CD4-positive, alpha-beta T cell (primary cell): ENCODE measurements at regions of chr19 and their contacts with region 1.

Region 1: DNA sequence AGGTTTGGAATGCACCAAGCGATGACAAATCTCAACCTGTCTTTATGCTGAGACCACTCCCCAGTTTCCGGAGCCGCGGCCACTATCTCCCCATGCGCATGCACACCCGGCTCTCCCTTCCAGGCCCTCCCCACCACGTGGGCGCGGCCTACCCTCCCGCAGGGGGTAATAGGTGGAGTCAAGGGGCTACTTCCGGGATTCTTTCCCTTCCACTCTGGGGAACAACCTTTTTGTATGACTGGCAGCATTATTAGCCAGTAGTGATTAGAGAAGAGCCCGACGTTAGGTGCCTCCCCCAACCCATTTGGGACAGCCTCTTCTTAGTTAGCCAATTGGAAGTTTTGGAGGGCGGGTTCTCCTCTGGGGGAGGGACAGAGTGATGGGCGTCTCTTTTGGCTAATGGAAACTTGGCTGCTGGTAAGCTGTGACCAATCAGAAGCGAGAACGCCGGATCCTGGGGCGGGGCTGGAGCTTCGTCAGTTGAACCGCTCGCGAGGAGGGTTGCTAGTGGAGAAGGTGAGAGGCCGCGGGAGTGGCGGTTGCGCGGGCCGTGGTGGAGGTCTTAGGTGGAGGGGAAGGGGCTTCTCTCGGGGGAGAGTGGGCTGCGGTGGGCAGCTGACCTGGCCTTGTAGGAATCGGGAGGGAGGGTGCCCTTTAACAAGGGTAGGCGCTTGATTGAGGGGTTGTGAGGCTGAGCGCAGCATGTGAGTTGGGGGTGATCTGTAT is at the start of gene CCDC61:
- DNase-seq: peak; percentile 91 to 100 (median 94)
- ATAC-seq: peak; percentile 94
- H3K4me3 ChIP-seq: peak within 1 kb of the TSS; percentile 79
- H3K4me3 Mint-ChIP-seq: no peak within 1 kb of the TSS
- H3K27ac ChIP-seq: peak within 1 kb of the TSS; percentile 49 to 67
- H3K27ac Mint-ChIP-seq: no peak within 1 kb of the TSS
- H3K4me1 ChIP-seq: peaks cover 27% of the 10 kb centered on the region
- H3K4me1 Mint-ChIP-seq: peaks cover 17% of the 10 kb centered on the region
- H3K27me3 ChIP-seq: no peaks in the 10 kb centered on the region
- H3K27me3 Mint-ChIP-seq: peaks cover 5% of the 10 kb centered on the region
- CTCF ChIP-seq: no peak
- total RNA-seq, gene CCDC61: 4.9 to 6.6 TPM

Region 2: DNA sequence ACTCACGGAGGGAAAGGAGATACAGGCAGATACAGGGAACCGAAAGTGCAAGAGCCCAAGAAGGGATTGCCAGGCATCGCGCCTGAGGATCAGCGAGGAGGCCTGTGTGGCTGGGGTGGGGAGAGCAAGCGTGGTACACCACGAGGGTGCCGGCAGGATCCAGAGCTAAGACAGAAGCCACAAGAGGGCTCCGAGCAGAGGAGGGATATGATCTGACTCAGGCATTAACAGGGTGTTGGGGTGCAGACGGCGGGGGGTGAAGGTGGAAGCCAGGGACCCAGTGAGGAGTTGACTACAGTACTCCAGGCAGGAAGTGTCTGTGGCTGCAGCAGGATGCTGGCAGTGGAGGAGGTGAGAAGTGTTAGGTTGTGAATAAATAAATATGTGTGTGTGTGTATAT is 907.6 kb before region 1 on chr19:
- CTCF ChIA-PET with region 1: no interaction called
- POLR2A ChIA-PET with region 1: no interaction called
- intact Hi-C with region 1: loop called in 1 of 2 experiments (anchors 10 kb)
- DNase-seq: peak in 12 of 14 experiments; percentile 23 to 90 (median 48)
- ATAC-seq: peak; percentile 52
- H3K4me3 ChIP-seq: no peak overlapping the region
- H3K4me3 Mint-ChIP-seq: peak overlapping the region; percentile 74
- H3K27ac ChIP-seq: peak overlapping the region; percentile 15 to 53
- H3K27ac Mint-ChIP-seq: peak overlapping the region; percentile 24
- H3K4me1 ChIP-seq: peaks cover 49% of the 10 kb centered on the region
- H3K4me1 Mint-ChIP-seq: peaks cover 25% of the 10 kb centered on the region
- H3K27me3 ChIP-seq: no peaks in the 10 kb centered on the region
- H3K27me3 Mint-ChIP-seq: no peaks in the 10 kb centered on the region
- CTCF ChIP-seq: no peak

Region 3: DNA sequence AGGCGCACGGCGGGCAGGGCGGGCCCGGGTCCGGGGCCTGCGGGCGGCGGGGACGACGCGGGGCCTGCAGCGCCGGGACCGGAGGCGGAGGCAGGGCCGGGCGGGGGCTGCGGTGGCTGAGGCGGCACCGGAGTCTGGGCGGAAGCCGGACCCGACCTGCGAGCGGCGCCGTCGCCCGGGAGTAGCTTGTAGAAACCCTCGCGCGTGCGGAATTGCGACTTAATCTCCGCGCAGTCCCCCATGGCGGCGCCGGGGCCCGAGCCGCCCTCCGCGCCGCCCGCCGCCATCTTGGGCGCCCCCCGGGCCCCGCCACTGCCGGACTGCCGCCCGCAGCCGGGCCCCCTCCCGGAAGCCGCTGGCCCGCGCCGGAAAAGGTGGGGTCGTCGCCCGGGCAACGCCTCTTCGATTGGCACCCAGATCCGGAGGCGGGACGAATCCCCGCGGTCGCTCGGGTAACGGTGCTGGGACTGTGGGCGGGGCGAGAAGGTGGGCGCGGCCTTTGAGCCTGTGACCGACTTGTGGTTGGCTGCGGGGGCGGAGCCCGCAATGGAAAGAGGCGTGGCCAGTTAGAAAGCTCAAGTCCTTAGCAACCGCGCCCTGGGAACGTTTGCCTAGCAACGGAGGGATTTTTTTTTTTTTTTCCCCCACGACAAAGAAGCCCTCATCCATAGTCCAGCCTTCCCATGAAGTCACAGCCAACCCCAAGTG is 202.5 kb before region 1 on chr19 and contains the start of gene DMWD:
- CTCF ChIA-PET with region 1: no interaction called
- POLR2A ChIA-PET with region 1: no interaction called
- intact Hi-C with region 1: loop called in 1 of 2 experiments (anchors 10 kb)
- DNase-seq: peak; percentile 98 to 100 (median 99)
- ATAC-seq: peak; percentile 92
- H3K4me3 ChIP-seq: peak within 1 kb of the TSS; percentile 55
- H3K4me3 Mint-ChIP-seq: peak within 1 kb of the TSS; percentile 92
- H3K27ac ChIP-seq: no peak within 1 kb of the TSS
- H3K27ac Mint-ChIP-seq: peak within 1 kb of the TSS; percentile 81
- H3K4me1 ChIP-seq: peaks cover 30% of the 10 kb centered on the region
- H3K4me1 Mint-ChIP-seq: peaks cover 52% of the 10 kb centered on the region
- H3K27me3 ChIP-seq: peaks cover 16 to 23% of the 10 kb centered on the region in 2 experiments
- H3K27me3 Mint-ChIP-seq: peaks cover 32% of the 10 kb centered on the region
- CTCF ChIP-seq: no peak
- total RNA-seq, gene DMWD: 28.6 to 31.5 TPM

Region 4: GRCh38 chr19:45862564-45863334 is 132.4 kb before region 1 on chr19 and contains the start of gene SYMPK:
- CTCF ChIA-PET with region 1: no interaction called
- POLR2A ChIA-PET with region 1: interaction called, 11 read pairs
- intact Hi-C with region 1: loop called in 1 of 2 experiments (anchors 2 kb)
- DNase-seq: peak; percentile 96 to 99 (median 98)
- ATAC-seq: peak; percentile 97
- H3K4me3 ChIP-seq: peak within 1 kb of the TSS; percentile 80
- H3K4me3 Mint-ChIP-seq: peak within 1 kb of the TSS; percentile 99
- H3K27ac ChIP-seq: peak within 1 kb of the TSS; percentile 66 to 86
- H3K27ac Mint-ChIP-seq: peak within 1 kb of the TSS; percentile 83
- H3K4me1 ChIP-seq: peaks cover 29% of the 10 kb centered on the region
- H3K4me1 Mint-ChIP-seq: peaks cover 34% of the 10 kb centered on the region
- H3K27me3 ChIP-seq: peaks cover 9 to 13% of the 10 kb centered on the region in 2 experiments
- H3K27me3 Mint-ChIP-seq: peaks cover 29% of the 10 kb centered on the region
- CTCF ChIP-seq: no peak
- total RNA-seq, gene SYMPK: 63.3 to 65.0 TPM

Region 5: DNA sequence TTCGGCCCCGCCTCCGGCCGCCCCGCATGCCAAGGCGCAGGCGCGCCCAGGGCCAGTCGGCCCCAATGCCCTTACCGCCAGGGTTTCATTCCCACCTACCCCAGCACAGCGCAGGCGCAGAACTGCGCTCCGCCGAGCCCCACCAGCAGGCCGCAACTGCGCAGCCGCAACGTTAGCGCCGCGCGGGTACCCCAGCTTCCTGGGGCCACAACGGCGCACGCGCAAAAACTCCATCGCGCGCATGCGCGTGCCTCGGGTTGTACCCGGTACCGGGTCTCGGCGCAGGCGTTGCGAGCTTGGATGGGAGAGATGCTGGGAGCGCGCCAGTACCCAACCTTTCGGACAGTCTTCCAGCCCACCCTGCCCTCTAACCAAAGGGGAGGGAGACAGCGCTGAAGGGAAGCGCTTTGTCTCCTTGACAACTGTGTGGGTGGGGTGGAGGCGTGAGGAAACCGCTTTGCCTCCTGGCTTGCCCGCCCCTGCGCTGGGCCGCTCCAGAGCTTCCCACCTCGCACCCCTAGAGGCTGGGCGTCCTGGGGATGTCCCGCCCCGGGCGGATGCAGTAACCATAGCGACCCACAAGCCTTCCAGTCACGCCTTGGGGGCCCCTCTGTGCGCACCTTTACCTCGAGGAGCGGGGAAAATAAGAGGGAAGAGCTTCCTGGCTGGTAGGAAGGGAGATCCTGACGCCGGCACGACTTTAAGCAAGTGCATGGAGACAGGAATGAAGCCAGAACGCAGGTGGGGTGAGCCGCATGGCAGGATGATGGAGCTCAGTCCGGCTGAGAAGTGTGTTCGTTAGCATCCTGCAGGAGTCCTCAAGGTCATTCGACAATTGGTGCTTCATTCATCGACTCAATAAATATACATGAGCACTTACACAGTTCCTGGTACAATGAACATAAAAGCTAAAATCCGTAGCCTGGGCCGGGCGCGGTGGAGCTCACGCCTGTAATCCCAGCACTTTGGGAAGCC is 92.2 kb before region 1 on chr19:
- CTCF ChIA-PET with region 1: no interaction called
- POLR2A ChIA-PET with region 1: interaction called, 7 read pairs
- intact Hi-C with region 1: loop called in 1 of 2 experiments (anchors 5 kb)
- DNase-seq: peak; percentile 97 to 100 (median 99)
- ATAC-seq: peak; percentile 81
- H3K4me3 ChIP-seq: peak overlapping the region; percentile 64
- H3K4me3 Mint-ChIP-seq: peak overlapping the region; percentile 95
- H3K27ac ChIP-seq: peak overlapping the region; percentile 68 to 85
- H3K27ac Mint-ChIP-seq: peak overlapping the region; percentile 89
- H3K4me1 ChIP-seq: peaks cover 26% of the 10 kb centered on the region
- H3K4me1 Mint-ChIP-seq: peaks cover 28% of the 10 kb centered on the region
- H3K27me3 ChIP-seq: no peaks in the 10 kb centered on the region
- H3K27me3 Mint-ChIP-seq: no peaks in the 10 kb centered on the region
- CTCF ChIP-seq: no peak

Region 6: DNA sequence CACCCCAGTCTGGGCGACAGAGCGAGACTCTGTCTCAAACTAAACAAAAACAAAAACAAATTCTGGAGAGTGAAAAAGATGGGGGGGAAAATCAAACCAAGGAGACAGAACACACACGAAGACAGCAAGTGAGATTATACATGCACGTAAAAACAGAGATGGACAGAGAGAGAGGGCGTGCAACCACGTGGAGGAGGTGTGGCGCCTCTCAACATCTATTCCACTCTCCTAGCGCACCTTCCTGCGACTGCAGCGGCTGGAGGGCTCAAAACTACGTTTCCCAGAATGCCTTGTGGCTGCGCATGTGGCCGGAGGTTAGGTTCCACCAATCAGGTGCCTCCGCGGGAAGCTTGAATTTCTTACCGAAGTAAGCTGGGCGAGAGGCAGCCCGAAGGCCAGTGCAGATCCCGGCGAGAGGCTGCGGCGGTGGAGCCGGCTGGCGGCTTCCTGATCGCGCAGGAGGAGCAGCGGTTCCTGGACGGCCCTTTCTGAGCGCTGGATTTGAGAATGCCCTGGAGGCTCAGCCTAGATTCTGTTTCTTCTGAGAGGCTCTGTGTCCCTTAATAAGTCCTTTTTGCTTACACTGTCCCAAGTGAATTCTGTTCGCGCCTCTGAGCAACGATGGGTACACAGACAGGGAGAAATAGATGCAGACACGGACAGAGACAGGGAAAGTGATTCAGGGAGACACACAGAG is 67.4 kb before region 1 on chr19:
- CTCF ChIA-PET with region 1: no interaction called
- POLR2A ChIA-PET with region 1: no interaction called
- intact Hi-C with region 1: loop called in 1 of 2 experiments (anchors 2 kb)
- DNase-seq: peak; percentile 78 to 95 (median 84)
- ATAC-seq: peak; percentile 100
- H3K4me3 ChIP-seq: no peak overlapping the region
- H3K4me3 Mint-ChIP-seq: peak overlapping the region; percentile 25
- H3K27ac ChIP-seq: no peak overlapping the region
- H3K27ac Mint-ChIP-seq: no peak overlapping the region
- H3K4me1 ChIP-seq: peaks cover 9% of the 10 kb centered on the region
- H3K4me1 Mint-ChIP-seq: peaks cover 9% of the 10 kb centered on the region
- H3K27me3 ChIP-seq: no peaks in the 10 kb centered on the region
- H3K27me3 Mint-ChIP-seq: peaks cover 22% of the 10 kb centered on the region
- CTCF ChIP-seq: no peak

Region 7: GRCh38 chr19:46016426-46017094 is 21.4 kb after region 1 on chr19:
- CTCF ChIA-PET with region 1: interaction called, 14 read pairs
- POLR2A ChIA-PET with region 1: interaction called, 6 read pairs
- intact Hi-C with region 1: loop called in 1 of 2 experiments (anchors 2 kb)
- DNase-seq: peak; percentile 67 to 93 (median 76)
- ATAC-seq: peak; percentile 74
- H3K4me3 ChIP-seq: peak overlapping the region; percentile 85
- H3K4me3 Mint-ChIP-seq: peak overlapping the region; percentile 95
- H3K27ac ChIP-seq: no peak overlapping the region
- H3K27ac Mint-ChIP-seq: peak overlapping the region; percentile 56
- H3K4me1 ChIP-seq: peaks cover 23% of the 10 kb centered on the region
- H3K4me1 Mint-ChIP-seq: peaks cover 21% of the 10 kb centered on the region
- H3K27me3 ChIP-seq: peaks cover 7 to 8% of the 10 kb centered on the region in 2 experiments
- H3K27me3 Mint-ChIP-seq: peaks cover 7% of the 10 kb centered on the region
- CTCF ChIP-seq: peak; percentile 94

Region 8: GRCh38 chr19:46503848-46504453 is 508.8 kb after region 1 on chr19:
- CTCF ChIA-PET with region 1: no interaction called
- POLR2A ChIA-PET with region 1: no interaction called
- intact Hi-C with region 1: no loop called
- DNase-seq: no peak
- ATAC-seq: no peak
- H3K4me3 ChIP-seq: no peak overlapping the region
- H3K4me3 Mint-ChIP-seq: no peak overlapping the region
- H3K27ac ChIP-seq: no peak overlapping the region
- H3K27ac Mint-ChIP-seq: no peak overlapping the region
- H3K4me1 ChIP-seq: no peaks in the 10 kb centered on the region
- H3K4me1 Mint-ChIP-seq: no peaks in the 10 kb centered on the region
- H3K27me3 ChIP-seq: peaks cover 0 to 2% of the 10 kb centered on the region in 2 experiments
- H3K27me3 Mint-ChIP-seq: peaks cover 29% of the 10 kb centered on the region
- CTCF ChIP-seq: no peak